ENCODE measurements at regions of chr17 and their contacts with region 1.

Region 1: GRCh38 chr17:72985881-72986720 is 106.4 kb downstream of the SLC39A11 start:
- ATAC-seq: peak in 4 of 8 experiments; percentile 37 to 94 (median 76)
- H3K4me3 ChIP-seq: no peak overlapping the region
- H3K27ac ChIP-seq: no peak overlapping the region
- H3K4me1 ChIP-seq: no peaks in the 10 kb centered on the region

Region 2: DNA sequence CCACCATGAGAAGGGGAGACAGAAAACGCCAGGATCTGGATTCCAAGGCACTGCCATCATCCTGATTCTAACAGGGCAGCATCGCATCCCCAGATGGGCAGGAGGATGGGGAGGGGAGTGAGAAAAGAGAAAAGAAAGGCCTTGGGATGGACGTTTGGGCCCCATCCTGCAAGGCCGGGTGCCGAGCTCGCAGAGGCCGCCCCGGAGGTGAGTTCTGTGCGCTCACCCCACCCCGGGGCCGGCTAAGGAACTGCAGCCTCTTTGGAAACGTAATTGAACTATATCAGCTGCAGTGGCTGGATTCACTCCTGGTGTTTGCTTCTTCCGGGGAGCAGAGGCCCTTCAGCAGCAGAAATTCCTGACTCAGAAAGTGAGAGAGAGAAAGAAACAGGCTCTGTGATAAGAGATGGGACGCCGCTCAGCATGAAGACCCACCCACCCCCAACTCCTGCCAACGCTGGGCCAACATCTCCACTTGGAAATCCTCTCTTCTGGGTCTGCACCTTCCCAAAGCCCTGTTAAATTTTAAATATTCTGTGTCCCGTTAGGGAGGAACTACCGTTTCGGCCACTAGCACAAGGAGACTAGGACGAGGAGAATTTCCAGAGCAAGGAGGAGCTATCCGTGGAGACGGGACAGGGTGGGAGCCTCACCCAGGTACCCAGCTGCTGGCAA is 170.2 kb after region 1 on chr17:
- in situ Hi-C with region 1: loop called in 2 of 9 experiments (anchors 25 kb)
- ATAC-seq: peak; percentile 93 to 99 (median 97)
- H3K4me3 ChIP-seq: no peak overlapping the region
- H3K27ac ChIP-seq: no peak overlapping the region
- H3K4me1 ChIP-seq: peaks cover 15 to 20% of the 10 kb centered on the region in 2 donors

Region 3: GRCh38 chr17:73210002-73210678 is 224.0 kb after region 1 on chr17:
- in situ Hi-C with region 1: no loop called
- ATAC-seq: no peak
- H3K4me3 ChIP-seq: no peak overlapping the region
- H3K27ac ChIP-seq: no peak overlapping the region
- H3K4me1 ChIP-seq: no peaks in the 10 kb centered on the region

Measured in motor neuron (in vitro differentiated cells).